GM12878 (cell line): ENCODE measurements at regions of chr11 and their contacts with region 1.

Region 1: GRCh38 chr11:69642913-69643632 is 2.1 kb downstream of the CCND1 start:
- DNase-seq: no peak
- ATAC-seq: peak; percentile 85
- H3K4me3 ChIP-seq: peak overlapping the region; percentile 71; the same call in 1 of the 2 replicates
- H3K27ac ChIP-seq: no peak overlapping the region
- H3K4me1 ChIP-seq: peaks cover 13% of the 10 kb centered on the region
- H3K27me3 ChIP-seq: peaks cover 10 to 23% of the 10 kb centered on the region in 2 experiments
- CTCF ChIP-seq: peak; percentile 87 to 92 (median 88)
- EP300 ChIP-seq: no peak
- POLR2A ChIP-seq: no peak
- RAD21 ChIP-seq: peak; percentile 98

Region 2: DNA sequence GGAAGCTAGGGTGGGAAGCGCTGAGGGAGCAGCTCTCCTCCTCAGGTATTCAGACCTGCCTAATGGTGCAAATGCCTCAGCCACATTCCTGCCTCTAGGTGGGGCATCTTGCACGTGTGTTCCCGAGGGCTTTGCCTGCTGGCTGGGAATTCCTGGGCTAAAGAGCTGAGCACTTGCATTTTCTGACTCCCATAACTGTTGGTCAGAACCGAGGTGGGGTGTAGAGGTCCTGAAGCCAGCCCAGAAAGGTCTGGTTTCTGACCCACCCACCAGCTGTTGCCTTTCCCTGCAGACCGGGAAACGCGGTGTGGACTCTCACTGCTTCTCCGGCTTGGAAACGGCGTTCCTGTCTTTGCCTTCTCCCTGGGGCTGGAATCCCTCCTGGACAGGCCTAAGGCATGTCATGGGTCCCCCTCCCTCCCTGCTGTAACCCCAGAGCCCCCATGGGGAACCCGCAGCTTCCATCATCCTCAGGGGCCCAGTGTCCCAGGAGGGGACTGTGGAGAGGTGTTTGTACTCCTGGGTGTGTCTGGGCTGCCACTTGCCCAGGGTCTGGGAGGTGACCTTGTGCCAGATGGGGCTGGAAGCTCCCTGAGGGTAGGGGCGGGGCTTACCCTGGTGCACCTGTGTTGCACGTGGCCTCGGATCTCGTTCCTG is 511.3 kb before region 1 on chr11:
- CTCF ChIA-PET with region 1: interaction called, 9 read pairs
- POLR2A ChIA-PET with region 1: no interaction called
- RAD21 ChIA-PET with region 1: interaction called, 14 read pairs
- SMC1A ChIA-PET with region 1: interaction called, 4 read pairs
- in situ Hi-C with region 1: no loop called
- intact Hi-C with region 1: no loop called
- DNase-seq: no peak
- ATAC-seq: no peak
- H3K4me3 ChIP-seq: no peak overlapping the region
- H3K27ac ChIP-seq: no peak overlapping the region
- H3K4me1 ChIP-seq: peaks cover 14% of the 10 kb centered on the region
- H3K27me3 ChIP-seq: no peaks in the 10 kb centered on the region
- CTCF ChIP-seq: peak; percentile 33 to 66 (median 33); a peak in 4 of 6 replicates
- EP300 ChIP-seq: no peak
- POLR2A ChIP-seq: no peak
- RAD21 ChIP-seq: peak; percentile 63

Region 3: GRCh38 chr11:69211920-69212571 is 431.0 kb before region 1 on chr11:
- CTCF ChIA-PET with region 1: no interaction called
- POLR2A ChIA-PET with region 1: no interaction called
- RAD21 ChIA-PET with region 1: interaction called, 4 read pairs
- SMC1A ChIA-PET with region 1: no interaction called
- in situ Hi-C with region 1: no loop called
- intact Hi-C with region 1: loop called (anchors 5 kb)
- DNase-seq: no peak
- ATAC-seq: no peak
- H3K4me3 ChIP-seq: no peak overlapping the region
- H3K27ac ChIP-seq: no peak overlapping the region
- H3K4me1 ChIP-seq: peaks cover 20% of the 10 kb centered on the region
- H3K27me3 ChIP-seq: no peaks in the 10 kb centered on the region; a peak in 1 of 4 replicates
- CTCF ChIP-seq: peak in 2 of 3 experiments; percentile 8 to 26; a peak in 2 of 6 replicates
- EP300 ChIP-seq: no peak
- POLR2A ChIP-seq: no peak
- RAD21 ChIP-seq: peak; percentile 38; the same call in 1 of the 2 replicates

Region 4: DNA sequence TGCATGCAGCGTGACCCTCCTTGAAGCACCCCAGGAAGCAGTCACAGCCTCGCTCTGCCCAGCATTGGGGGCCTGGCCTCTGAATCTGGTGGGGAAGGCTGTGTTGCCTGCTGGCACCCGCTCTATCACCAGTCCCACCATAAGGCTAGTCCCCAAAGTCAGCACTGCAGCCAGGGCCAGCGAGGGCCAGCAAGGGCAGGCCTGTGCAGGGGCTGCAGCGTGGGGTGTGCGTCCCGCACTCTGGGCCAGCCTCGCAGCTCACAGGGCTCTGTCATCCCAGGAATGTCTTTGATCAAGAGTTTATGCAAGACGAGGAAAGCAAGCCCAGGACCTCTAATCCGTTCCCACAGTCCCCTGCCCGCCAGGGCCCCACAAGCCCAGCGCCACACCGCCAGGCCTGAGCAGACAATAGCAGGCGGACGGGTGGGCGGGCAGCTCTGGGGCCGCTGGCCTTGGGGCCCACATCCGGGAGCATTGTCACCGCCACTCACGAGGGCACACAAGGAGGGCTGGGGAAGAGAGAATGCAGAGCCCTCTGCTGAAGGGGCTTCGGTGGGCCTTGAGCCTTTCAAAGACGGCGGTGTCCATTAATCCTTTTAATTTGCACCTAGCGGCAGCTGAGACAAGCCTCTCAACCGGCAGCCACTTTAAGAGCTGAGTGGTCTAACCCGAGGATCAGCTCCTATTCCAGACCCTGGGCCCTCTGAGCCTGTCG is 15.0 kb after region 1 on chr11:
- CTCF ChIA-PET with region 1: no interaction called
- POLR2A ChIA-PET with region 1: no interaction called
- RAD21 ChIA-PET with region 1: no interaction called
- SMC1A ChIA-PET with region 1: no interaction called
- in situ Hi-C with region 1: no loop called
- intact Hi-C with region 1: no loop called
- DNase-seq: no peak
- ATAC-seq: no peak
- H3K4me3 ChIP-seq: no peak overlapping the region
- H3K27ac ChIP-seq: no peak overlapping the region
- H3K4me1 ChIP-seq: no peaks in the 10 kb centered on the region
- H3K27me3 ChIP-seq: no peaks in the 10 kb centered on the region
- CTCF ChIP-seq: no peak
- EP300 ChIP-seq: no peak
- POLR2A ChIP-seq: no peak
- RAD21 ChIP-seq: no peak

Region 5: GRCh38 chr11:69670158-69670845 is 27.2 kb after region 1 on chr11:
- CTCF ChIA-PET with region 1: interaction called, 18 read pairs
- POLR2A ChIA-PET with region 1: no interaction called
- RAD21 ChIA-PET with region 1: no interaction called
- SMC1A ChIA-PET with region 1: interaction called, 5 read pairs
- in situ Hi-C with region 1: no loop called
- intact Hi-C with region 1: no loop called
- DNase-seq: no peak
- ATAC-seq: peak; percentile 60
- H3K4me3 ChIP-seq: no peak overlapping the region
- H3K27ac ChIP-seq: no peak overlapping the region
- H3K4me1 ChIP-seq: no peaks in the 10 kb centered on the region; the same call in 1 of the 2 replicates
- H3K27me3 ChIP-seq: no peaks in the 10 kb centered on the region
- CTCF ChIP-seq: peak; percentile 92 to 95 (median 93); a peak in 5 of 6 replicates
- EP300 ChIP-seq: no peak
- POLR2A ChIP-seq: no peak
- RAD21 ChIP-seq: peak; percentile 50

Region 6: DNA sequence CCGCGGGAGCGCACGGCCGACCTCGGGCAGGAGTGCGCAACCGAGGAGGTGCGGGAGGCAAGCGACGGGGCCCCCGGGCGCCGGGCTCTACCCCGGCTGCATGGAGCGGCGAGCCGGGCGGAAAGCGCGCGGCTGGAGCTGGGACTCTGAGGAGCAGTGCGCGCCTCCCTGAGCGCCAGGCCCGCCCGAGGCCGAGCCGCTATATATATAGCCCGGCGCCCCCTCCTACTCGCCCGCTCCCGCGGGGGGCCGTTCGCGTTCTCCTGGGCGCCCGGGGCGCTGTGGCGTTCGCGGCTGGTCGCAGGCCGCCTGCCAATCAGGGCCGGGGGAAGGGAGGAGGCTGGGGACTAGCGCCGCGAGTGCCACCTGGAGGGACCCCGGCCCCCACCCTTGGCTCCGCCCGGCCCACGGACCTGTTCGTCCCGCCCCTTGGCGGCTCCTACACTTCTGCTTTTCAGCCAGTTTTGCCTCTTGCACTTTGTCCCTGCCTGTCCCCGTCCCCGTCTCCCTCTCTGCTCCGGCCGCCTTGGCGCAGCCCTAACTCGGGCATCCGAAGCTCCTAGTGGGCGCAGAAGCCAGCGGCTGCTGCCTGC is 132.2 kb after region 1 on chr11 and contains the start of gene FGF4:
- CTCF ChIA-PET with region 1: no interaction called
- POLR2A ChIA-PET with region 1: no interaction called
- RAD21 ChIA-PET with region 1: no interaction called
- SMC1A ChIA-PET with region 1: no interaction called
- in situ Hi-C with region 1: no loop called
- intact Hi-C with region 1: no loop called
- DNase-seq: no peak
- ATAC-seq: no peak
- H3K4me3 ChIP-seq: no peak within 1 kb of the TSS
- H3K27ac ChIP-seq: no peak within 1 kb of the TSS
- H3K4me1 ChIP-seq: no peaks in the 10 kb centered on the region
- H3K27me3 ChIP-seq: peaks cover 0 to 2% of the 10 kb centered on the region in 2 experiments; a peak in 2 of 4 replicates
- CTCF ChIP-seq: no peak
- EP300 ChIP-seq: no peak
- POLR2A ChIP-seq: no peak
- RAD21 ChIP-seq: no peak
- polyA plus RNA-seq, gene FGF4: not detected

Region 7: DNA sequence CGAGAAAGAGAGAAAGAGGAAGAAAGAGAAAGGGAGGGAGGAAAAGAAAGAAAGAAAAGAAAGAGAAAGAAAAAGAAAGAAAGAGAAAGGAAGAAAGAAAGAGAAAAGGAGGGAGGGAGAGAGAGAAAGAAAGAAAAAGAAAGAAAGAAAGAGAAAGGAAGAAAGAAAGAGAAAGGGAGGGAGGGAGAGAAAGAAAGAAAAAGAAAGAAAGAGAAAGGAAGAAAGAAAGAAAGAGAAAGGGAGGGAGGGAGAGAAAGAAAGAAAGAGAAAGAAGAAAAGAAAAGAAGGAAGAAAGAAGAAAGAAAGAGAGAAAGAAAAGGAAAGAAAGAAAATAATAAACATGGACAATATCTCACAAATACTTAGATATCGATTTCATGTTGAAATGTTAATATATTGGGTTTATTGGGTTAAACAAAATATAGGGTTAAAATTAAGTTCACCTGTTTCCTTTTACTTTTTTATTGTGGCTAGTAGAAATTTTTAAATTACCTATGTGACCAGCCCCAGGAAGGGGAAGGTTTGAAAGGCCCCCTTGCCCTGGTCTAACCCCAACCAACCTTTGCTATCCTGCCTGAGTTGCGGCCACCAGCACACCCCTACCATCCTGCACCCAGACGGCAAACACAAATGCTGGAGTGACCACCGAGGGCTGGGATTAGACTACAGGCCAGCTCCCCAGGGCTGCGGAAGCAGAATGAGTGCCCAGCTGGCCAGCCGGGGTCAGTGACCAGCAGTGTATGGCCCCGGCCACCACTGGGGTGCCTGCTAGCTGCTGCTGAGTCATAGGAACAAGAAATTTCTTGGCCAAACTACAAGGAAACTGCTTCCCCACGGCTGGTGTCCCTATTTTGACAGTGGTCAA is 257.1 kb after region 1 on chr11:
- CTCF ChIA-PET with region 1: no interaction called
- POLR2A ChIA-PET with region 1: no interaction called
- RAD21 ChIA-PET with region 1: no interaction called
- SMC1A ChIA-PET with region 1: no interaction called
- in situ Hi-C with region 1: no loop called
- intact Hi-C with region 1: no loop called
- DNase-seq: no peak
- ATAC-seq: no peak
- H3K4me3 ChIP-seq: no peak overlapping the region
- H3K27ac ChIP-seq: no peak overlapping the region
- H3K4me1 ChIP-seq: no peaks in the 10 kb centered on the region
- H3K27me3 ChIP-seq: no peaks in the 10 kb centered on the region; a peak in 2 of 4 replicates
- CTCF ChIP-seq: no peak
- EP300 ChIP-seq: no peak
- POLR2A ChIP-seq: no peak
- RAD21 ChIP-seq: no peak